ENCODE measurements at regions of chr10 and their contacts with region 1.

Region 1: GRCh38 chr10:31819391-31819820 is 109.2 kb downstream of the ARHGAP12 start:
- DNase-seq: peak; percentile 93
- H3K4me3 ChIP-seq: no peak overlapping the region
- H3K27ac ChIP-seq: peak overlapping the region; percentile 82
- H3K4me1 ChIP-seq: peaks cover 69% of the 10 kb centered on the region
- H3K27me3 ChIP-seq: no peaks in the 10 kb centered on the region

Region 2: GRCh38 chr10:31340343-31340742 is 479.1 kb before region 1 on chr10:
- in situ Hi-C with region 1: loop called (anchors 10 kb)
- DNase-seq: no peak
- H3K4me3 ChIP-seq: no peak overlapping the region
- H3K27ac ChIP-seq: no peak overlapping the region
- H3K4me1 ChIP-seq: peaks cover 24% of the 10 kb centered on the region
- H3K27me3 ChIP-seq: no peaks in the 10 kb centered on the region